PC-9 (cell line): ENCODE measurements at regions of chr12 and their contacts with region 1.

Region 1: GRCh38 chr12:78636231-78636855 is 228.2 kb upstream of the SYT1 start:
- DNase-seq: no peak
- H3K4me3 ChIP-seq: no peak overlapping the region
- H3K27ac ChIP-seq: no peak overlapping the region
- H3K4me1 ChIP-seq: no peaks in the 10 kb centered on the region
- H3K27me3 ChIP-seq: no peaks in the 10 kb centered on the region
- CTCF ChIP-seq: no peak

Region 2: DNA sequence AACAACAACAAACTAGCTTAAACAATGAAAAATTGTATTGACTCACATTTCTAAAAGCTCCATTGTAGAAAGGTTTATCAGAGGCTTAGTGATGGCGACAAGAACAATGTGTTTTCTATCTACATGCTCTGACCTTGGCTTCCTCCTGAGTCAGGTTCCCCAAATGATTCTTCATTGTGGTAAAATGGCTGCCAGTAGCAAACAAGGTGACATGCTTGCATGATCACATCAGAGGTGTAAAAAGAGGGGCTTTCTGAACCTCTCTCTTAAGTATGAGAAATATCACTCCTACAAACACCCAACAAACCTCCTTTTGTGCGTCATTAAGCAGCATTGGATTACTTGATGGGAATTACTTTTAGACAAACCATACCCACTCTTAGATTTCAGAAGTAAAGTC is 24.2 kb before region 1 on chr12:
- CTCF ChIA-PET with region 1: no interaction called
- POLR2A ChIA-PET with region 1: no interaction called
- intact Hi-C with region 1: loop called (anchors 2 kb)
- DNase-seq: no peak
- H3K4me3 ChIP-seq: no peak overlapping the region
- H3K27ac ChIP-seq: no peak overlapping the region
- H3K4me1 ChIP-seq: no peaks in the 10 kb centered on the region
- H3K27me3 ChIP-seq: no peaks in the 10 kb centered on the region
- CTCF ChIP-seq: no peak